Posterior cingulate gyrus (tissue), 11 donors: ENCODE measurements at regions of chr20 and their contacts with region 1.

Region 1: GRCh38 chr20:54416770-54417169 is 58.6 kb upstream of the DOK5 start:
- DNase-seq: no peak

Region 2: GRCh38 chr20:54284934-54285704 is 131.7 kb before region 1 on chr20:
- intact Hi-C with region 1: loop called (anchors 5 kb)
- DNase-seq: no peak